HCT116 (cell line): ENCODE measurements at regions of chr16 and their contacts with region 1.

Region 1: DNA sequence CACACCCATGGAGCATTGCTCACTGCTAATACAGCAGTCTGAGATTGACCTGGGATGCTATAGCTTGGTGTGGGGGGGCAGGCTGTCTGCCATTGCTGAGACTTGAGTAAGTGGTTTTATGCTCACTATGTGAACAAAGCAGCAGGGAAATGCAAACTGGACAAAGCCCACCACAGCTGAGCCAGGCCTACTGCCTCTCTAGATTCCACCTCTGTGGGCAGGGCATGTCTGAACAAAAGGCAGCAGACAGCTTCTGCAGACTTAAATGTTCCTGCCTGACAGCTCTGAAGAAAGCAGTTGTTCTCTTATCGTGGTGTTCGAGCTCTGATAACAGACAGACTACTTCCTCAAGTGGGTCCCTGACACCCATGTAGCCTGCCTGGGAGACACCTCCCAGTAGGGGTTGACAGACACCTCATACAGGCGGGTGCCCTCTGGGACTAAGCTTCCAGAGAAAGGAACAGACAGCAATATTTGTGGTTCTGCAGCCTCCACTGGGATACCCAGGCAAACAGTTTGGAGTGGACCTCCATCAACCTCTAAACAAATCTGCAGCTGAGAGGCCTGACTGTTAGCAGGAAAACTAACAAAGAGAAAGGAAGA is 2204.8 kb downstream of the TP53TG3F start:
- DNase-seq: no peak
- ATAC-seq: no peak
- H3K4me3 ChIP-seq: no peak overlapping the region
- H3K27ac ChIP-seq: no peak overlapping the region
- H3K4me1 ChIP-seq: no peaks in the 10 kb centered on the region
- H3K27me3 ChIP-seq: no peaks in the 10 kb centered on the region
- CTCF ChIP-seq: no peak
- POLR2A ChIP-seq: no peak
- RAD21 ChIP-seq: no peak

Region 2: GRCh38 chr16:35873472-35873871 is 209.3 kb after region 1 on chr16:
- CTCF ChIA-PET with region 1: no interaction called
- POLR2A ChIA-PET with region 1: no interaction called
- RAD21 ChIA-PET with region 1: no interaction called
- intact Hi-C with region 1: loop called (anchors 10 kb)
- DNase-seq: no peak
- ATAC-seq: no peak
- H3K4me3 ChIP-seq: no peak overlapping the region
- H3K27ac ChIP-seq: no peak overlapping the region
- H3K4me1 ChIP-seq: no peaks in the 10 kb centered on the region
- H3K27me3 ChIP-seq: no peaks in the 10 kb centered on the region
- CTCF ChIP-seq: no peak
- POLR2A ChIP-seq: no peak
- RAD21 ChIP-seq: no peak